CD8-positive, alpha-beta memory T cell (primary cell): ENCODE measurements at regions of chr22 and their contacts with region 1.

Region 1: DNA sequence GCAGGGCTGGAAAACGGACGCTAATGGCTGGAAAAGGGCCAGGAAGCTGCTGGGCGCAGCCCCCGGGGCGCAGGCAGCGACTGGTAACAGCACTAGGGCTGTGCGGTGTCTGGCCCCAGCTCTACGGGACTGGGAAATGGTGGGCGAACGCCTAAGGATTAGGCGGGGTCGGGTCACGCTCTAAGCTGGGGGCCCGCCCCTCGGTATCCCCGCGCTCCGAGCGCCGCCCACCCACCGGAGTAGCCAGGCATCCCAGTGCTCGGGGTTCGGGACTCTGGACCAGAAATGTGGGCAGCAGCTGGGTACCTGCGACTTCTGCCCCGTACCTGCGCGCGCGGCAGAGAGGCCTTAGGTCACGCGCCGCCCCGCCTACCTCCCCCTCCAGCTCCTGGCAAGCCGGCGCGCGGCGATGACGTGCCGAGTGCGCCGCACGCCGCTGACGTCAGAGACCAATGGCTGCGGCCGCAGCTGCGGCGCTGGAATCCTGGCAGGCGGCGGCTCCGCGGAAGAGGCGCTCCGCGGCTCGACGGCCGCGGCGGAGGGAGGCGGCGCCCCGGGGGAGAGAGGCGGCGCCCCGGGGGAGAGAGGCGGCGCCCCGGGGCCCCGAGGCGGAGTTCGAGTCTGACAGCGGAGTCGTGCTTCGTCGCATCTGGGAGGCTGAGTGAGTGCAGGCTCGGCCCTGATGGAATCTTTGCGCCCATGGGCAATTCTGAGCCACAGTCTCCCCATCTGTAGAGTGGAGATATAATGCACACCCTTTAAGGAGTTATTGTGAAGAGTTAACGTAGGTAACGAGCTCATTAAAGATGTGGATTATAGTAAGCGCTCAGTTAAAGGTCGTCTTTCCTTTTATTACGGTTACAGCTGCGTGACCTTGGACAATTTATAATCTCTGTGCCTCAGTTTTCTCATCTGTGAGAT is at the starts of genes HPS4 and SRRD:
- DNase-seq: peak; percentile 90 to 95 (median 93)
- H3K4me3 ChIP-seq: peak within 1 kb of the TSS; percentile 53
- H3K4me3 Mint-ChIP-seq: peak within 1 kb of the TSS; percentile 81 to 98 (median 93)
- H3K27ac ChIP-seq: peak within 1 kb of the TSS; percentile 93
- H3K27ac Mint-ChIP-seq: peak within 1 kb of the TSS; percentile 93 to 99 (median 99)
- H3K4me1 ChIP-seq: peaks cover 56% of the 10 kb centered on the region
- H3K4me1 Mint-ChIP-seq: peaks cover 63 to 75% (median 73%) of the 10 kb centered on the region in 3 donors
- H3K27me3 ChIP-seq: no peaks in the 10 kb centered on the region
- H3K27me3 Mint-ChIP-seq: no peaks in the 10 kb centered on the region
- total RNA-seq, gene HPS4: 36.7 to 36.8 TPM
- total RNA-seq, gene SRRD: 32.8 to 33.3 TPM

Region 2: DNA sequence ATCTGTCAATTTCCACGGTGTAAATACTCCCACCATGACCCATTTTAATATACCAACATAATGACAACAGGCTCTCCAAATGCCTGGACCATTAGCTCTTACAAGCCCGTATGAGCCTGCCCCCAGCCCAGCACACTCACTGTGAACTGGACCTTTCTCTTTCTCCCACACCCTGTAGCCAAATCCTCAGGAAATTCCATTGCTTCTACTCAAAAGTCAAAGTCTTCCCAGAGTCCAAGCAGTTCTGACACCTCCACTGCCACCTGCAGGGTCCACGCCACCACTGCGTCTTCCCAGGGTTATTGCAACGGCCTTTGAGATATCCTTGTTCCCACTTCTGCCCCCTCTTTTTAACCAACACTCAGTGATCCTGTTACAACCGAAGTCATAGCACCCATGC is 164.7 kb before region 1 on chr22:
- CTCF ChIA-PET with region 1: no interaction called
- POLR2A ChIA-PET with region 1: no interaction called
- DNase-seq: no peak
- H3K4me3 ChIP-seq: no peak overlapping the region
- H3K4me3 Mint-ChIP-seq: no peak overlapping the region
- H3K27ac ChIP-seq: no peak overlapping the region
- H3K27ac Mint-ChIP-seq: no peak overlapping the region
- H3K4me1 ChIP-seq: no peaks in the 10 kb centered on the region
- H3K4me1 Mint-ChIP-seq: no peaks in the 10 kb centered on the region
- H3K27me3 ChIP-seq: no peaks in the 10 kb centered on the region
- H3K27me3 Mint-ChIP-seq: peaks cover 2 to 42% of the 10 kb centered on the region in 2 donors

Region 3: DNA sequence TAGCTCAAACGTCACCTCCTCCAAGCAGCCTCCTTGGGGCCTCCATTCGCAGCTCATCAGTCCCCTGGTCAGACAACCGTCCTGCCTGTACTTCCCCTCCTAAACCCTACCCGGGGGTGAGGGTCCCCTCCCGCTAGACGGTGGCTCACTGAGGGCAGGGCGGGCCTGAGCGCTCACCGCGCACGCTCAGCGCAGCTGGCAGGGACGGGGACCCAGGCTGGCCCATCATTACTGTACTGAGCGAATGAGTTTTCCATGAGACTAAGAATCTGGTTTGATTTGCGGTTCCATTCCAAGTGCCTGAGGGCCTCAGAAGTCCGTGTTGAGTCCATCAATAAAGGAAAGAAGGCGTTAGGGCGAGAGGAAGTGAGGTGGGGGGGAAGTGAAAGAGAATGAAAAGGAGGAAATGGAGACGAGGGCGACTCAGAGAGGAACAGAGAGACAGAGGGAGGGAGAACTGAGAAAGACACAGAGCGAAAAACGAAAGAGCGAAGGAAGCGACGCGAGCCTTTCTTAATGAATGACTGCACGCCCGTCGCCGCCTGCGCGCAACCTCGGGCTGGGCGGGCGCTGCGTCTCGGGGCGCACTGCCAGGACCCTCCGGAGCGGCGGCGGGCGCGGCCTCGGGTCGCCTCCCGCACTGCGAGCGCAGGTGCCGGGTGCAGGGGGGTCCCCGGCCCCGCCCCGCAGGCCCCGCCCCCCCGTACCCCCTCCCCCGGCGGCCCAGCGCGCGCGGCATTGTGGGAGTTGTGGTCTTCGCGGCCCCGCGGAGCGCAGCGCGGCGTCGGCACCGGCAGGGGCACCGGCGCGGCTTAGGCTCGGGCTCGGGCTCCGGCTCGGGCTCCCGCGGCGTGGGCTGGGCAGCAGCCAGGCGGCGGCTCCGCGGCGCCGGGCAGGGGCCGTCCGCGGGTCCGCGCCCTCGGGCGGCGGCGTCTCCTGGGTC is 54.9 kb before region 1 on chr22 and contains the start of gene ASPHD2:
- CTCF ChIA-PET with region 1: interaction called, 5 read pairs
- POLR2A ChIA-PET with region 1: interaction called, 22 read pairs
- DNase-seq: peak; percentile 74 to 89 (median 86)
- H3K4me3 ChIP-seq: peak within 1 kb of the TSS; percentile 100
- H3K4me3 Mint-ChIP-seq: peak within 1 kb of the TSS; percentile 94 to 100 (median 98)
- H3K27ac ChIP-seq: peak within 1 kb of the TSS; percentile 95
- H3K27ac Mint-ChIP-seq: peak within 1 kb of the TSS; percentile 97 to 100 (median 98)
- H3K4me1 ChIP-seq: peaks cover 26% of the 10 kb centered on the region
- H3K4me1 Mint-ChIP-seq: peaks cover 28 to 43% (median 34%) of the 10 kb centered on the region in 3 donors
- H3K27me3 ChIP-seq: no peaks in the 10 kb centered on the region
- H3K27me3 Mint-ChIP-seq: peaks cover 3% of the 10 kb centered on the region in 2 donors
- total RNA-seq, gene ASPHD2: 13.1 to 14.2 TPM

Region 4: GRCh38 chr22:26494506-26494905 is 10.8 kb after region 1 on chr22:
- CTCF ChIA-PET with region 1: interaction called, 3 read pairs
- POLR2A ChIA-PET with region 1: interaction called, 13 read pairs
- DNase-seq: no peak
- H3K4me3 ChIP-seq: no peak overlapping the region
- H3K4me3 Mint-ChIP-seq: no peak overlapping the region
- H3K27ac ChIP-seq: no peak overlapping the region
- H3K27ac Mint-ChIP-seq: peak overlapping the region in 3 of 8 donors; percentile 22 to 66 (median 52)
- H3K4me1 ChIP-seq: no peaks in the 10 kb centered on the region
- H3K4me1 Mint-ChIP-seq: peaks cover 0 to 6% (median 4%) of the 10 kb centered on the region in 3 donors
- H3K27me3 ChIP-seq: no peaks in the 10 kb centered on the region
- H3K27me3 Mint-ChIP-seq: no peaks in the 10 kb centered on the region

Region 5: GRCh38 chr22:26672590-26673468 is 189.1 kb after region 1 on chr22:
- CTCF ChIA-PET with region 1: interaction called, 3 read pairs
- POLR2A ChIA-PET with region 1: interaction called, 34 read pairs
- DNase-seq: peak; percentile 86 to 96 (median 92)
- H3K4me3 ChIP-seq: peak overlapping the region; percentile 94
- H3K4me3 Mint-ChIP-seq: peak overlapping the region; percentile 95 to 98 (median 98)
- H3K27ac ChIP-seq: peak overlapping the region; percentile 91
- H3K27ac Mint-ChIP-seq: peak overlapping the region; percentile 93 to 100 (median 98)
- H3K4me1 ChIP-seq: peaks cover 83% of the 10 kb centered on the region
- H3K4me1 Mint-ChIP-seq: peaks cover 81 to 94% (median 87%) of the 10 kb centered on the region in 3 donors
- H3K27me3 ChIP-seq: no peaks in the 10 kb centered on the region
- H3K27me3 Mint-ChIP-seq: no peaks in the 10 kb centered on the region